Ovary (tissue), 10 donors: ENCODE measurements at regions of chr3 and their contacts with region 1.

Region 1: GRCh38 chr3:27114684-27115083 is 254.5 kb downstream of the NEK10 start:
- DNase-seq: no peak
- H3K4me3 ChIP-seq: no peak overlapping the region
- H3K27ac ChIP-seq: no peak overlapping the region
- H3K4me1 ChIP-seq: no peaks in the 10 kb centered on the region
- H3K27me3 ChIP-seq: no peaks in the 10 kb centered on the region
- CTCF ChIP-seq: no peak
- EP300 ChIP-seq: no peak
- POLR2A ChIP-seq: no peak

Region 2: DNA sequence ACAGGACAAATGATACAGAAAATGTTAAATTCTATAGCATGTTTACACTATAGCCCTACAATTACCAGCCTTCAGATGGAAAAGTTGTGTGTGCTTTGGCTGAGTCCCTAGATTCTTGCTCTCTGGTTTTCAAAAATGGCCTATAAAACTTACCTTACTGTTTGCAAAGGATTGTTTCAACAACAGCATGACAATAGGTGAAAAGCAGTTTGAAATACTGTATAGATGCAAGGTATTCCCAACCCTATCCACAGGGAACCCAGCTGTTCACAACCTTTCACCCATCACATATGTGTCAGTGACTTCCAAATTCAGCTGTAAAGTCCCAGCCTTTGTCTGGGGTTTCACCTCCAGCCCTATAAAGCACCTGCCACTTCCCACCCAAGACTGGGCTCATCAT is 157.2 kb after region 1 on chr3:
- intact Hi-C with region 1: loop called in 1 of 4 experiments (anchors 5 kb)
- DNase-seq: no peak
- H3K4me3 ChIP-seq: no peak overlapping the region
- H3K27ac ChIP-seq: no peak overlapping the region
- H3K4me1 ChIP-seq: no peaks in the 10 kb centered on the region
- H3K27me3 ChIP-seq: no peaks in the 10 kb centered on the region
- CTCF ChIP-seq: no peak
- EP300 ChIP-seq: no peak
- POLR2A ChIP-seq: no peak